ENCODE measurements at regions of chr3 and their contacts with region 1.

Region 1: GRCh38 chr3:157136647-157137387 is 23.1 kb downstream of the CCNL1 start:
- DNase-seq: no peak
- CTCF ChIP-seq: no peak

Region 2: DNA sequence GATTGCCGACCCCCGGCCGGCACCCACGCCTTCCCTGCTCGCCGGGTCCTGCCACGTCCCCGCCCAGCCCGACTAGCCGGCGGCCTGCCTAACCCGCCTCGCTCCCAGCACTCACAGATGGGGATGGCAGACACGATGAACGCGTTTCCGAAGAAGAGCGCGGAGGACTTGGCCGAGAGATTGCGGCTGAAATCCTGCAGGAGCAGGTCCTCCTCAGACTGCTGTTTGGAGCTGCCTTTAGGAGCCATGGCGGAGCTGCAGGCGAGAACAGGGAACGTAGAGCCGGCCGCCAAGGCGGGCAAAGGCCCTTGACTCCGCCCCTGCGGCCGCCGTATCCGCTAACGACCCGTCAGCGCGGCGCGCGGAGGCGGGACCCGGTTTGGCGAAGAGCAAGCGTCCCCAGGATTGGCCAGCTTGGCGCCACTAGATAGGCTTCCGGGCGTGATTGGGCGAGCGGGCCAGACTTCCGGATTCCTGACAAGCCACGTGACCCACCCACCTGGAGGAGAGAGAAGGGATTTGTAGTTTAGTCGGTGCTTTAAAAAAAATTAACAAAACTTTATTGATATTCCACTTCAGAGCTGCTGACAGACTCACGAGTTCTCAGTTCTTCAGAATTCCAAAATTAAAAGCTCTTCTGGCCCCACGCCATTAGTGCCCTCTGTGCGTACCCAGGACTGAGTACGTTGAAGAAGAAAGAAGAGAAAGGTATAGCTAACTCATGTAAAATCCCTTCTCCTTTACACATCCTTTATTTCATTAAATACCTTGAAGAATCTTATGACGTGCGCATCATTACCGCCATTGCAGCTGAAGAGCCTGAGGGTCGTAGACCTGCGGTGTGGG is 581.8 kb before region 1 on chr3 and contains the start of gene SSR3:
- CTCF ChIA-PET with region 1: interaction called, 16 read pairs
- POLR2A ChIA-PET with region 1: no interaction called
- DNase-seq: peak; percentile 95
- CTCF ChIP-seq: no peak

Region 3: DNA sequence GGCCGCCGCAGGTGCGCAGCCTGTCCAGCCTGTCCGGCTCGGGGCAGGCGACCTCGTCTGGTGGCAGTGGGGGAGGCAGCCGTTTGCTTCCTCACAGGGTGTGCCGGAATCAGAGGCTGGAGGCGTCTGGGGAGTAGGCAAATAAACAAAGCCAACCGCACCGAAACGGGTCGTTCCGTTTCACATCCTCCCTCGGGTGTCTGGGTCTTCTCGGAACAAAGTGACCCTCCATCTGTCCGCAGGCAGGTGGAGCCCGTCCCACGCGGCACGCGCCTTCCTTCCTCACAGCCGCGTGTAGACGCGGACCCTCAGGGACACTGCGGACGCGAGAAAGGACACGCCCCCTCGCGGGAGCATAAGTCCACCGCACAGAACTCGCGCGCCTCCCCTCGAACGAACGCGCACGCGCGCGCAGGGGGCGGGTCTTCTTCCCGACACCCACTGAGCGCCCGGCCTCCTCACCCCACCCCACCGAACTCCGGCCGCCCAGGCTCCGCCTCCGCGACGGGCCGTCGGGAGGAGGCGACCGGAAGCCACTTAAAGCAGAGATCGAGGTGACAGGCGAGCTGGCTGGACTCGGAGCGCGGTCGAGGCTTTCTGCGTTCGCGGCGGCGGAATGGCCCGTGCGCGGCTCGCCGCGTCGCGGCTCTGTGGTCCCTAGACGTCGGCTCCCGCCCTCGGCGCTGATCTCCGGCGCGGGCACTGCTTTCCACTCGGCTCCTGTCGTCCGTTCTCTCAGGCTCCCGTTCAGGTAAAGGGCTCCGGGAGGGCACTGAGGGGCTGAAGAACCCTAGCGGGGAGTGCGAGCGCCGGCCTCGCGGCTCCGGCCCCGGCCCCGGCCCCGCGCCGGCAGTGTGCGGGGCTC is 462.5 kb before region 1 on chr3 and contains the start of gene TIPARP:
- CTCF ChIA-PET with region 1: interaction called, 58 read pairs
- POLR2A ChIA-PET with region 1: no interaction called
- DNase-seq: peak; percentile 98
- CTCF ChIP-seq: peak; percentile 78

Region 4: GRCh38 chr3:156808025-156808424 is 328.8 kb before region 1 on chr3:
- CTCF ChIA-PET with region 1: interaction called, 11 read pairs
- POLR2A ChIA-PET with region 1: no interaction called
- DNase-seq: no peak
- CTCF ChIP-seq: no peak

Region 5: DNA sequence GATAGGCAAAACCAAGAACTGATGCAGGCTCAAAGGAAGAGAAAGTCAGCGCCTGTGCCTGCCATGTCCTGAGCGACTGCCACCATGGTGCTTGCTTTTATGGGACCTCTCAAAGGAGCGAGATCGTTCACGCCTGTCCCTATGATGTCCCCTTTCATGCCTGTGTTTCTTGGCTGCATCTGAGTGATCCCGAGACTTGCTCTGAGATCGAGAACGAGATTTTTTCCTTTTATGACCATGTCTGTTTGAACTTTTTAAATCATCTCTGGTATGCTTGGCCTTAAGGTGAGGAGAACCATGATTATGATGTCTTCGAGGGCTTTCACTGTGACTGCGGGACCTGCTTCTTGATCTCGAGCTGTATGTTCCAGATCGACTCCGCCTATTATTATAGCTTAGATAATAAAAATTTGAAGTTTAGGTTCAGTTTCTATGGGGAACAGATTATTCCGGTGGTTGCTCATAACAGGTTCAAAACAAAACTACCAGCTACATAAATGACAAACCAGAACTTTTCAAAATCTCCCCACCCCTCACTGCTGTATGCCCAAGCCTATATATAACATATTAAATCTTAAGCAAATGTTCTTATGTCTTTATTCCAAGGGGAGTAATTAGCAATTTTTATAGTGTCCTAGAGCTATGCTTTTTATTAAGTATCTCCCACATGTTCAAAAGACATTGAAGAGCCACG is 11.5 kb after region 1 on chr3:
- CTCF ChIA-PET with region 1: interaction called, 56 read pairs
- POLR2A ChIA-PET with region 1: no interaction called
- DNase-seq: no peak
- CTCF ChIP-seq: no peak

Region 6: GRCh38 chr3:157311633-157312375 is 175.0 kb after region 1 on chr3:
- CTCF ChIA-PET with region 1: no interaction called
- POLR2A ChIA-PET with region 1: no interaction called
- DNase-seq: no peak
- CTCF ChIP-seq: no peak

Measured in GM10248 (cell line).